Ascending aorta (tissue), 2 donors: ENCODE measurements at regions of chr11 and their contacts with region 1.

Region 1: GRCh38 chr11:128133501-128133900 is 453.9 kb downstream of the ETS1 start:
- DNase-seq: no peak
- H3K4me3 ChIP-seq: no peak overlapping the region
- H3K27ac ChIP-seq: peak overlapping the region; percentile 17 to 54
- H3K4me1 ChIP-seq: peaks cover 0 to 7% of the 10 kb centered on the region in 2 donors
- H3K27me3 ChIP-seq: no peaks in the 10 kb centered on the region
- CTCF ChIP-seq: peak; percentile 6 to 46 (median 16)

Region 2: DNA sequence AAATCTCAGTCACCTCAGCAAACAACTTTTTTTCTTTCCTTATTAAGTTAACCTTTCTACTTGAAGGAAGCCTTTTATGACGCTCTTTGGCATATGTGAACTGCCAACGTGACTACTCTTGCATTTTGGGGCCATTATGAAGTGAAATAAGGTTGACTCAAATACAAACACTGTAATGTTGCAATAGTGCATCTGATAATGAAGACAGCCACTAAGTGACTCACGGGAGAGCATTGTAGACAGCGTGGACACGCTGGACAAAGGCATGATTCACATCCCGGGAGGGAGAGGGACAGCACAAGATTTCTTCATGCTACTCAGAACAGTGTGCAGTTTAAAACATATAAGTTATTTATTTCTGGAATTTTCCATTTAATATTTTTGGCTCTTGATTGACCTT is 106.9 kb before region 1 on chr11:
- intact Hi-C with region 1: loop called (anchors 2 kb)
- DNase-seq: no peak
- H3K4me3 ChIP-seq: no peak overlapping the region
- H3K27ac ChIP-seq: no peak overlapping the region
- H3K4me1 ChIP-seq: peaks cover 0 to 4% of the 10 kb centered on the region in 2 donors
- H3K27me3 ChIP-seq: no peaks in the 10 kb centered on the region
- CTCF ChIP-seq: no peak